ENCODE measurements at regions of chr3 and their contacts with region 1.

Region 1: DNA sequence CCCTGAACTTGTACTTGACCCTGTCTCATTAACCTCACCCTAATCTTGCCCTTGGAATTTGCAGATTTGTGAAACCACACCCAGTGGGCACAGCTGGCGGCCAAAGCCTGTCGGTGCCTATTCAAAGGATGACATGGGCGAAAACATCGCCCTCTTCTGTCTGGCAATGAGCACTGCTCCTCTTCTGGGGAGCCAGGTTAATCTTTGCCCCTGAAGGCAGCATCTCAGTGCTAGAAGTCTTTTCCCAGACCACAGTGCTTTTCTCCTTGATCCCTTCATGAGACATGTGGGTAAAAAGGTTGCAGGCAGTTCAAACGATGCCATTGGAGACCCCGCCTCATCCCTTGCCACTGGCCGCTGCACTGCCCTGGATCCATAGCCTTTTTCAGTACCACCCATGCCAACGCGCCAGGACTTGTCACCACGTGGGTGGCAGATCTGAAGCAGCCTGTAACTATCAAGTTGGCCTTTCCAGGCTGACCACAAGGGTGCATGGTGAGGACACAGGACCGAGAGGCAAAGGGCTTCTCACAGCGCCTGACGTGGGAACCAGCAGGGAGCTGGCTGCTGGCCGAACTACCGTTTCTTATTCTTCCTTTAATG is 6.5 kb upstream of the DNASE1L3 start:
- DNase-seq: peak; percentile 73
- H3K4me3 Mint-ChIP-seq: no peak overlapping the region
- H3K27ac Mint-ChIP-seq: no peak overlapping the region
- H3K4me1 Mint-ChIP-seq: peaks cover 33% of the 10 kb centered on the region
- H3K27me3 Mint-ChIP-seq: no peaks in the 10 kb centered on the region

Region 2: GRCh38 chr3:58177747-58178527 is 39.4 kb before region 1 on chr3:
- CTCF ChIA-PET with region 1: interaction called, 165 read pairs
- intact Hi-C with region 1: loop called (anchors 2 kb)
- DNase-seq: peak; percentile 95
- H3K4me3 Mint-ChIP-seq: peak overlapping the region; percentile 59
- H3K27ac Mint-ChIP-seq: no peak overlapping the region
- H3K4me1 Mint-ChIP-seq: peaks cover 13% of the 10 kb centered on the region
- H3K27me3 Mint-ChIP-seq: peaks cover 6% of the 10 kb centered on the region

Region 3: GRCh38 chr3:58198362-58198761 is 18.9 kb before region 1 on chr3:
- CTCF ChIA-PET with region 1: interaction called, 8 read pairs
- intact Hi-C with region 1: loop called (anchors 2 kb)
- DNase-seq: peak; percentile 22
- H3K4me3 Mint-ChIP-seq: no peak overlapping the region
- H3K27ac Mint-ChIP-seq: no peak overlapping the region
- H3K4me1 Mint-ChIP-seq: peaks cover 6% of the 10 kb centered on the region
- H3K27me3 Mint-ChIP-seq: peaks cover 2% of the 10 kb centered on the region

Region 4: GRCh38 chr3:58237238-58237940 is 20.1 kb after region 1 on chr3 and contains the start of gene ABHD6:
- CTCF ChIA-PET with region 1: interaction called, 47 read pairs
- intact Hi-C with region 1: loop called (anchors 1 kb)
- DNase-seq: peak; percentile 75
- H3K4me3 Mint-ChIP-seq: peak within 1 kb of the TSS; percentile 86
- H3K27ac Mint-ChIP-seq: peak within 1 kb of the TSS; percentile 46
- H3K4me1 Mint-ChIP-seq: peaks cover 10% of the 10 kb centered on the region
- H3K27me3 Mint-ChIP-seq: peaks cover 6% of the 10 kb centered on the region
- total RNA-seq, gene ABHD6: 1.1 to 1.6 TPM